Left cardiac atrium (tissue), 4 donors: ENCODE measurements at regions of chr4 and their contacts with region 1.

Region 1: GRCh38 chr4:48668254-48669017 is 111.6 kb downstream of the FRYL start:
- DNase-seq: no peak
- ATAC-seq: peak; percentile 46 to 76

Region 2: GRCh38 chr4:48203819-48204218 is 464.6 kb before region 1 on chr4:
- intact Hi-C with region 1: no loop called
- DNase-seq: no peak
- ATAC-seq: peak in 1 of 2 donors; percentile 59

Region 3: DNA sequence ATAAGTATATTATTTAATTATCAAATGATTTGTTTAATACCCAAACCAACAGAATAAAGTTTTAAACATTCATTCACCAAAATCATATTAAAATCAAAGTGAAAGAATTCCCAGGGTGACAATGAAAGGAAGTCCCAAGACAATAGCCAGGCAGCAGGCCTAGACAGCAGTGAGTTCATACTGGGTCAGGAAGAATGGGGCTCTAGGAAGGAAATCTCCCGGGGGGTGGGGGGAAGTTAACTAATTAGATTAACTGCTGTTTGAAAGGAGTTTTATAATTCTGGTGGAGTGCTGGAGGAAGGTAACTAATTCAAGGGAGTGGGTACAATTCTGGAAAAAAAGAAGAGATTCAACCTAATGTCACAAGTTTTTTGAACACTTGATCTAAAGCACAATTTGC is 74.3 kb before region 1 on chr4:
- intact Hi-C with region 1: loop called in 1 of 2 experiments (anchors 10 kb)
- DNase-seq: peak; percentile 34
- ATAC-seq: peak in 1 of 2 donors; percentile 63